ENCODE measurements at regions of chr20 and their contacts with region 1.

Region 1: DNA sequence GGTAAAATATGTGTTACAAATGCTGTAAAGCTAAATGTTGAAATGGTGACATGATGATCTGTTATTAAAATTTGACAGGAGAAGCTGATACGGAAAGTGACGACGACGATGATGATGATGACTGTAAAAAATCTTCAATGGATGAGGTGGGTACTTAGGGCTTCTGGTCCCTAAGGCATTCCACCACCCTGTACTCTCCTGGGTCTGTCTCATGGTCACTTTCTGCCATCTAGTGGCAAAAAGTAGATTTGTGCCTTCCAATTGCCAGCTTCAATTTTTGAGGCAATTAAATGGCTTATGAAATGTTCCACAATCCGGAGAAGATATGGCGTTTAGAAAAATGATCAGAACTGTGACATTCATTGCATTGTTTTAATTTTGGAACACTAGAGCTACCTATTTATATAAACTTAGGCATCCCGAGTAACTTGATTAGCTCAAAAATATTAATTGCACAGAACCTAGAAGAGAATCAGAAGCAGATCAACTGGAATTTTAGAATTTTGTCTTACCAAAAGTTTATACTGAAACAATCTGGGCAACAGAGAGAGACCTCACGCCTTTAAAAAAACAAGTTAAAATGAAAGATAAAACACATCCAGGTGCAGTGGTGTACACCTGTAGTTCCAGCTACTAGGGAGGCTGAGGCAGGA is 346.5 kb upstream of the PLCB4 start:
- DNase-seq: peak; percentile 26 to 65 (median 46)
- H3K4me3 ChIP-seq: no peak overlapping the region
- H3K27ac ChIP-seq: no peak overlapping the region
- H3K4me1 ChIP-seq: no peaks in the 10 kb centered on the region
- H3K27me3 ChIP-seq: no peaks in the 10 kb centered on the region
- CTCF ChIP-seq: peak; percentile 73 to 90 (median 86)
- POLR2A ChIP-seq: no peak

Region 2: DNA sequence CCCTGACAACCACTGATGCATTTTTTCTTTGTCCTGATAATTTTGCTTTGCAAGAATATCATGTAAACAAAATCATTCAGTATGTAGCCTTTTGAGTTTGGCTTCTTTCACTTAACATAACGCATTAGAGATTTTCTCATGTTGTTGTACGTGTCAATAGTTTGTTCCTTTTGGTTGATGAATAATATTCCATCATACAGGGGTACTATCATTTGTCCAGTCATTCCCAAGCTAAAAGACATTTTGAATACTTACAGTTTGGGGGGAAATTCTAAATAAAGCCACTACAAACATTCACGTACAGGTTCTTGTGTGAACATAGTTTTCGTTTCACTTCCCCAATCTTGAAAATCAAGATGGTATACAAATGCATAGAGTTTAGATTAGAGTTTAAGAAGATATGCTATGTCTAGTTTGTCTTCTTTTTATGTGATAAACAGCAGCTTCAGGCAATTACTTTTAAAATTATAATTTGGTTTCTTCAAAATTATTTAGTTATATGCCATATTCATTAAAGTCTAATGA is 787.3 kb before region 1 on chr20:
- intact Hi-C with region 1: loop called in 1 of 2 experiments (anchors 5 kb)
- DNase-seq: no peak
- H3K4me3 ChIP-seq: no peak overlapping the region
- H3K27ac ChIP-seq: no peak overlapping the region
- H3K4me1 ChIP-seq: peaks cover 0 to 5% of the 10 kb centered on the region in 2 donors
- H3K27me3 ChIP-seq: no peaks in the 10 kb centered on the region
- CTCF ChIP-seq: no peak
- POLR2A ChIP-seq: no peak

Region 3: GRCh38 chr20:8020314-8021079 is 701.9 kb before region 1 on chr20:
- intact Hi-C with region 1: loop called in 1 of 2 experiments (anchors 10 kb)
- DNase-seq: no peak
- H3K4me3 ChIP-seq: peak overlapping the region in 1 of 4 donors; percentile 33
- H3K27ac ChIP-seq: peak overlapping the region in 2 of 5 donors; percentile 97
- H3K4me1 ChIP-seq: peaks cover 0 to 15% of the 10 kb centered on the region in 2 donors
- H3K27me3 ChIP-seq: no peaks in the 10 kb centered on the region
- CTCF ChIP-seq: no peak
- POLR2A ChIP-seq: no peak

Region 4: DNA sequence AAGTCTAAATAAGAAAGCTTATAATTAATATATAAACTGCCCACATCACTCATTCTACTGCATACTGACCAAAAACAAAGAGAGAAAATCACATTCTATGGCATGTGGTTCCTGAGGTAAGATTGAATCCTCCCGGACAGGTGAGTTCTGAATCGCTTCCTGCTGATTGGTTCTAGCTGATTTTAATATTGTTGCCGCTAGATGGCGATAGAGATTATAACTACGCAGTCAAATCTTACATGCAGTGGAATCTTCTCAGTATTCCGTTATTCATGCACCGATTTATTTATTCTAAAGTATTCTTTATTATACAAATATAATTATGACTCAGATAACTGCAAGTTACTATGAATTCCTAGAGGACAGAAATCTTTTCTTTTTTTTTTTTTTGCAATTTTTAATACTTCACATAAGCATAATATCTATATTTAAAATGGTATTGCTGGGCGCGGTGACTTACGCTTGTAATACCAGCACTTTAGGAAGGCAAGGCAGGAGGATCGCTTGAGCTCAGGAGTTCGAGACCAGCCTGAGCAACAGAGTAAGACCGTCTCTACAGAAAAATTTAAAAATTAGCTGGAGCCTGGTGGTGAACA is 678.6 kb before region 1 on chr20:
- intact Hi-C with region 1: loop called in 1 of 2 experiments (anchors 5 kb)
- DNase-seq: peak in 2 of 7 donors; percentile 25 to 34
- H3K4me3 ChIP-seq: no peak overlapping the region
- H3K27ac ChIP-seq: no peak overlapping the region
- H3K4me1 ChIP-seq: no peaks in the 10 kb centered on the region
- H3K27me3 ChIP-seq: no peaks in the 10 kb centered on the region
- CTCF ChIP-seq: peak; percentile 56 to 85 (median 73)
- POLR2A ChIP-seq: no peak